ENCODE measurements at regions of chr7 and their contacts with region 1.

Region 1: GRCh38 chr7:136009488-136010079 is 32.4 kb upstream of the MTPN start:
- DNase-seq: peak; percentile 69
- H3K4me3 ChIP-seq: no peak overlapping the region
- H3K27ac ChIP-seq: no peak overlapping the region
- H3K4me1 ChIP-seq: peaks cover 17% of the 10 kb centered on the region
- CTCF ChIP-seq: peak; percentile 98

Region 2: GRCh38 chr7:135672560-135673359 is 336.8 kb before region 1 on chr7:
- CTCF ChIA-PET with region 1: no interaction called
- POLR2A ChIA-PET with region 1: no interaction called
- intact Hi-C with region 1: loop called (anchors 10 kb)
- DNase-seq: peak; percentile 50
- H3K4me3 ChIP-seq: no peak overlapping the region
- H3K27ac ChIP-seq: no peak overlapping the region
- H3K4me1 ChIP-seq: no peaks in the 10 kb centered on the region
- CTCF ChIP-seq: peak; percentile 91